ENCODE measurements at regions of chr10 and their contacts with region 1.

Region 1: GRCh38 chr10:59240582-59241183 is 64.2 kb downstream of the PHYHIPL start:
- DNase-seq: no peak
- H3K4me3 ChIP-seq: no peak overlapping the region
- H3K27ac ChIP-seq: no peak overlapping the region
- H3K4me1 ChIP-seq: no peaks in the 10 kb centered on the region
- H3K27me3 ChIP-seq: no peaks in the 10 kb centered on the region
- CTCF ChIP-seq: peak; percentile 63 to 83 (median 67)
- EP300 ChIP-seq: no peak
- POLR2A ChIP-seq: no peak

Region 2: DNA sequence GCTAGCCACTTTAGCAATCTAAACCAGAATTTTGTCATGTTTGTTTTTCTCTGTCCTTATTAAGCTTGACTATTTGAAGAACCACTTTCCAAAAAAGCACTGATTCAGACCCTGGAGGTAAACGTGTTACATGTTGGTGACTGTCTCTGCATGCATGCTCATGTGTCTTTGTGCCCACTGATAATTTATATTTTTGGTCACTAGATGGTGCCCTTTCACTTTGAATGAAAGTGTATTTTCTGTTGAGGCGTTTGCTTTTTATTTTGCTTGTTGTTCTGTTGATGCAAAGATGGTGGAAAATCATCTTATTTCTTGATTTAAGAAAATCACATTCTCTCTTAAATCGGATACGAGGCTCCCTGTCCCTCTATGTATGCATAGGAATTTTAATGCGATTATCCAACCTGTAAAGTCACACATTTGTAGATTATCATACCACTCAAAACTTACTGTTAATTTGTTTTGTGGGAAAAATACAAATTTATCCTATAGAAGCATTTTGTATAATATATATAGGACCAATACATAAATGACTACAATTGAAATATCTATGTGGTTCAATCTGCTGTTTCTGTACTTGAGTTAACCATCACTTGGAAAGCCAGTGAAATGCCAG is 458.7 kb before region 1 on chr10:
- in situ Hi-C with region 1: loop called in 1 of 4 experiments (anchors 10 kb)
- intact Hi-C with region 1: no loop called
- DNase-seq: no peak
- H3K4me3 ChIP-seq: no peak overlapping the region
- H3K27ac ChIP-seq: peak overlapping the region in 1 of 4 donors; percentile 66
- H3K4me1 ChIP-seq: peaks cover 2 to 22% (median 17%) of the 10 kb centered on the region in 4 donors
- H3K27me3 ChIP-seq: no peaks in the 10 kb centered on the region
- CTCF ChIP-seq: peak; percentile 54 to 57 (median 56)
- EP300 ChIP-seq: no peak
- POLR2A ChIP-seq: no peak

Region 3: DNA sequence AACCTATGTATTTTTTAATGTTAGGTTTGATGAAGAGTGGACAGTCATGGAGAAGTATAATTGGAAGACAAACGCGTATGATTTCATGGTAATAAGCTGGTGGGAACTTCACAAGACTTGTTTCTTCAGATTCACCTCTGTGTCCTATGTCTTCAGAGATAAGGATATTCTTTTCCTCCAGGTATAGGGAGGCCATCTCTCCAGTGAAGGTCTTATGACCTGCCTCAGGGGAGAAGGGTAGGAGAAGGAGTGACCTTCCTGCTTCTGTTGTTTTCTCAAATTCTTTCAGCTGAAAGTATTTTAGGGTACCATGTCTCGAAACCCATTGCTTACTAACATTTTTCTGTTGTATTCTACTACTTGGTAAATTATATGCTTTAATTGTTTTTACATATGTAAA is 45.3 kb before region 1 on chr10:
- in situ Hi-C with region 1: no loop called
- intact Hi-C with region 1: no loop called
- DNase-seq: no peak
- H3K4me3 ChIP-seq: no peak overlapping the region
- H3K27ac ChIP-seq: no peak overlapping the region
- H3K4me1 ChIP-seq: no peaks in the 10 kb centered on the region
- H3K27me3 ChIP-seq: no peaks in the 10 kb centered on the region
- CTCF ChIP-seq: no peak
- EP300 ChIP-seq: no peak
- POLR2A ChIP-seq: no peak

Region 4: DNA sequence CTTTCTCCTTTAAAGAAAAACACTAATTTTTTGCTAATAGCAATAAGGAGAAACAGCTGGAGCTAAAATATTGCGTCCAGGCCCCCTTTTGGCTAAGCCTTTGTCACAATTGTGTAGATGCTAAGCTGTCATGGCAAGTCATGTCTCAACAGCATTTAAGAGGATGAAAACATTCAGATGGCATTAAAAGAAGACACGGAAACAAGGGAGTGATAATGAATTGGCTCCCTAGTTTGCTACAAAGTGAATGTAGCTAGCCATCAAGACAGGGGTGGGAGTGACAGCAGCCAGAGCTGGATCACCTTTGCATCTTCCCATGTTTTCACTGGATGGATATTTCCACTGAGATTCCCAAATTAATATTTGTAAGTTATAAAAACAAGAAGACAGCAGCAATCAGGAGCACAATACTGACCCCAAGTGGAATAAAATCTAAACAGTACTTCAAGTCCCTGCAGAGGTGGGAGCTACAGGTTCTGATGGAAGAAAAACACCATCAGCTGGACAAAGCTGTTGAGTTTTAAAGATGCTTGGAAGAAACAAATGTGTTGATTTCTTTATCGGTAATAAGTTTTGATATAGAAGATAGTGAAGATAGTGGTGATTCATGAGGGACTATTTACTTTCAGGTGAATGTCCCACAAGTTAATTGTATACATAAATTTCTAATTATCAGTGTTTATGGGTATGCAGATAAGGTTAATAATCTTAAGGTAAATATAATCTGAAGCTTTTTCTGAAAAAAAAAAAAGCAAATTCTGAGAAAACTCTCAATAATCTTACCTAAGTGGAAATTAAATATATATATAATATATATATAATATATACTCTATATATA is 339.6 kb after region 1 on chr10:
- in situ Hi-C with region 1: loop called in 1 of 4 experiments (anchors 25 kb)
- intact Hi-C with region 1: loop called (anchors 10 kb)
- DNase-seq: no peak
- H3K4me3 ChIP-seq: no peak overlapping the region
- H3K27ac ChIP-seq: no peak overlapping the region
- H3K4me1 ChIP-seq: peaks cover 0 to 10% (median 2%) of the 10 kb centered on the region in 4 donors
- H3K27me3 ChIP-seq: no peaks in the 10 kb centered on the region
- CTCF ChIP-seq: peak in 4 of 5 experiments; percentile 18 to 45 (median 34)
- EP300 ChIP-seq: no peak
- POLR2A ChIP-seq: no peak

Region 5: GRCh38 chr10:59606551-59606961 is 365.9 kb after region 1 on chr10:
- in situ Hi-C with region 1: loop called in 1 of 4 experiments (anchors 25 kb)
- intact Hi-C with region 1: no loop called
- DNase-seq: no peak
- H3K4me3 ChIP-seq: no peak overlapping the region
- H3K27ac ChIP-seq: no peak overlapping the region
- H3K4me1 ChIP-seq: peaks cover 0 to 19% (median 10%) of the 10 kb centered on the region in 4 donors
- H3K27me3 ChIP-seq: no peaks in the 10 kb centered on the region
- CTCF ChIP-seq: no peak
- EP300 ChIP-seq: no peak
- POLR2A ChIP-seq: no peak

Region 6: DNA sequence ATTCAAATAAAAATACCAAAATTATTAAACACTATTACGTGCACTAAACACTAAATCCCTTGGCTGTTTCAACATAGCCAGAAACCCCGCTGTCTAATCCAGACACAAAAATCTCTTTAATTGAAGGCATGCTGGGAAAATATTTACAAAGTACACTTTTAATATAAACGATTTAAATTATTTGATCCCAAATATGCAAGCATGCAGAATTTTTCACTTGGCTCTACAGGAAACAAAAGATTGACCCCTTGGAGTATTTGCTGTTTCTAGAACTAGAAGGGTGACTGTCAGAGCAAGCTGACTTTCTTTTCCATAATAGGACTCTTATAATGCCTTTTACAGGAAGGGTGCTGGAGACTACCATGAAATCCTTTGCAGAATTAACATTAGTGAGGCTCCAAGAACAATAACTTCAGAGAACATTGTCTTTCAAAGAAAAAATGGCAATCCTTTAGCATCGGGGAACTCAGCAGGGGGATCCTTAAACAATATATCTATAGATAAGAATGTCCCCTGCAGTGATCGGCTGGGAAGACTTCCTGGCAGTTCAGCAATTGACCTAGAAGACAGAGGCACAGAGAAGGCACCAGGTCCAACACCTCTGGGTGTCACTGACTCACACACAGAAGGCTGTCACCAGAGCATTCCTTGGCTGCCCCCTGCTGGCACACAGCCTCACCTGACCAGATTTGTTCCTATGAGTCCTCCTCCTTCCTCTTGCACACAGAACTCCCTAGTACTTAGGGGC is 568.4 kb after region 1 on chr10:
- in situ Hi-C with region 1: loop called (anchors 10 to 25 kb)
- intact Hi-C with region 1: no loop called
- DNase-seq: peak; percentile 86
- H3K4me3 ChIP-seq: no peak overlapping the region
- H3K27ac ChIP-seq: peak overlapping the region in 1 of 4 donors; percentile 4
- H3K4me1 ChIP-seq: peaks cover 0 to 8% (median 0%) of the 10 kb centered on the region in 4 donors
- H3K27me3 ChIP-seq: no peaks in the 10 kb centered on the region
- CTCF ChIP-seq: peak; percentile 60 to 79 (median 71)
- EP300 ChIP-seq: no peak
- POLR2A ChIP-seq: no peak

Region 7: GRCh38 chr10:59817773-59818172 is 577.1 kb after region 1 on chr10:
- in situ Hi-C with region 1: loop called in 3 of 4 experiments (anchors 10 to 25 kb)
- intact Hi-C with region 1: no loop called
- DNase-seq: no peak
- H3K4me3 ChIP-seq: no peak overlapping the region
- H3K27ac ChIP-seq: no peak overlapping the region
- H3K4me1 ChIP-seq: no peaks in the 10 kb centered on the region
- H3K27me3 ChIP-seq: no peaks in the 10 kb centered on the region
- CTCF ChIP-seq: no peak
- EP300 ChIP-seq: no peak
- POLR2A ChIP-seq: no peak

Region 8: GRCh38 chr10:60032723-60033122 is 792.0 kb after region 1 on chr10:
- in situ Hi-C with region 1: loop called in 2 of 4 experiments (anchors 25 kb)
- intact Hi-C with region 1: no loop called
- DNase-seq: peak; percentile 60
- H3K4me3 ChIP-seq: no peak overlapping the region
- H3K27ac ChIP-seq: no peak overlapping the region
- H3K4me1 ChIP-seq: peaks cover 0 to 22% (median 8%) of the 10 kb centered on the region in 4 donors
- H3K27me3 ChIP-seq: no peaks in the 10 kb centered on the region
- CTCF ChIP-seq: peak; percentile 21 to 65 (median 47)
- EP300 ChIP-seq: no peak
- POLR2A ChIP-seq: no peak

Measured in transverse colon (tissue), 4 donors.